ENCODE measurements at regions of chr20 and their contacts with region 1.

Region 1: DNA sequence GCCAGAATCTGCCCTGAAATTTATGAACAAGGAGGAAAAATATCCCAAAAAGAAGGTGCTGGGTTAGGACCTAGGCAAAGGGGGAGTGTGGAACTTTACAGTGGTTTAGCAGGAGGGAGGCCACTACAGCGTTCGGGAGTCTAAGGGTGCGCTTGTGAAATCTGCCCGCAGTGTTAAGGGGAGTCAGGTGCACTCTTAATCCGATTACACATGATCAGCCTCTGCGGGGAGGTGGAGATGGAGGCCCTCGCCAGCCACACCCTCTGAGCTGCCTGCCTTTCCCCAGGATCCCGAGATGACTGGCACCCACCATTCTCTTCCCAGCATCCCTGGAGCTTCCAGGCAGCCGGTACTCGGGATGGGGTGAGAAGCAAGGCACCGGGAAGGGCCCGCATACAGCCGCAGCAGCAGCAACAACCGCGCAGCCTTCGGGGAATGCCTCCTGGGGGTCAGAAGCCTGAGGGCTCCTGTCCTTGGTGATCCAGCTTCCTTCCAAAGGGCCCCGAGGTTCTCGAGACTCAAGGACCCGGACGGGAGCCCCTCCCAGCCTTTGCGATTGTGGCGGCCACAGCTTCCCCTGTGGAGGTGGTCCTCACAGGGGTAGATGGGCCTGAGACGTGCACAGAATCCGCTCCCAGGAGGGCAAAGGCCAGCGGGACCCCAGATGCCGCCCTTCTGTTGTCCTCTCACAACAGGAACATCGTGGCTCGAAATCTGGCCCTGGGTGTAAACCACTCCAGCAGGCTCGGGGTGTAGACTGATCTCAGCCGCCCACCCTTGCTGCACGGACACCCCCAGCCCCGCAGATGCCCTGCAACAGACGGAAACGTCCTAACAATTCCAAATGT is 57.3 kb upstream of the CST7 start:
- DNase-seq: no peak
- H3K4me3 ChIP-seq: no peak overlapping the region
- H3K27ac ChIP-seq: no peak overlapping the region
- H3K4me1 ChIP-seq: no peaks in the 10 kb centered on the region
- H3K27me3 ChIP-seq: no peaks in the 10 kb centered on the region
- CTCF ChIP-seq: no peak
- POLR2A ChIP-seq: no peak

Region 2: DNA sequence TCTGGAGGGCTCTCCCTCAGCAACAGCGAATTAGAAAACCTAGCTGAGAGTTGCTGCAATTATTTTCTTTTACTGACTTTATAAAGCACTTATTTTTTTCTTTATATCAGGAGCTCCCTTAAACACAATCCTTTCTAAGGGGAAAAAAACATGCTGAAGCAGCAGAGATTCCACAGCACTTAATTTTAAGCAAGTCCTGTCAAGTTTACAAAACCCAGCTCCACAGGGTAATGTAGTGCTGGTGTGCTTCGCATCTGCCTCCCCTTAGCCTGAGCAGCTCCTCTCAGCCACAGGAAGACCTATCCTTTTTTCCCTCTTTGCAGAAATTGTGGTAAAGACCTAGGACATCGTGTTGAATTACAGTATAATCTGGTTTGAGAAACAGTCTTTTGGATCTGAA is 630.4 kb before region 1 on chr20:
- intact Hi-C with region 1: loop called (anchors 10 kb)
- DNase-seq: no peak
- H3K4me3 ChIP-seq: no peak overlapping the region
- H3K27ac ChIP-seq: no peak overlapping the region
- H3K4me1 ChIP-seq: no peaks in the 10 kb centered on the region
- H3K27me3 ChIP-seq: no peaks in the 10 kb centered on the region
- CTCF ChIP-seq: no peak
- POLR2A ChIP-seq: no peak

Region 3: DNA sequence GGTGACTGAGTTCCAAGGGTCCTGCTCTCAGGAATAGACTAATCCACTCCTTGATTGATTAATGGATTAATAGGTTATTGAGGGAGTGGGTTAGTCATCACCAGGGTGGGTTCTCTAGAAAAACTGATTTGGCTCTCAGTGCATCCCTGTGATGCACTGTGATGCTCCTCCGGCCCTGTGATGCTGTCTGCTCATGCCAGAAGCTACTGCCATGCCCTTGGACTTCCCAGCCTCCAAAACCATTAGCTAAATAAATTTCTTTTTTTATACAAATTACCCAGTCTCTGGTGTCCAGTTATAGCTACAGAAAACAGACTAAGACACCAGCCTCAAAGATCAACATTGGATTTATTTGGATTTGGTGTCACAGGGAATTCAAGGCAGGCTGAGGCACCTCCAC is 16.9 kb after region 1 on chr20:
- intact Hi-C with region 1: no loop called
- DNase-seq: no peak
- H3K4me3 ChIP-seq: no peak overlapping the region
- H3K27ac ChIP-seq: no peak overlapping the region
- H3K4me1 ChIP-seq: no peaks in the 10 kb centered on the region
- H3K27me3 ChIP-seq: no peaks in the 10 kb centered on the region
- CTCF ChIP-seq: no peak
- POLR2A ChIP-seq: no peak

Measured in prostate gland (tissue), 2 donors.